Lower lobe of right lung (tissue), 2 donors: ENCODE measurements at regions of chr15 and their contacts with region 1.

Region 1: DNA sequence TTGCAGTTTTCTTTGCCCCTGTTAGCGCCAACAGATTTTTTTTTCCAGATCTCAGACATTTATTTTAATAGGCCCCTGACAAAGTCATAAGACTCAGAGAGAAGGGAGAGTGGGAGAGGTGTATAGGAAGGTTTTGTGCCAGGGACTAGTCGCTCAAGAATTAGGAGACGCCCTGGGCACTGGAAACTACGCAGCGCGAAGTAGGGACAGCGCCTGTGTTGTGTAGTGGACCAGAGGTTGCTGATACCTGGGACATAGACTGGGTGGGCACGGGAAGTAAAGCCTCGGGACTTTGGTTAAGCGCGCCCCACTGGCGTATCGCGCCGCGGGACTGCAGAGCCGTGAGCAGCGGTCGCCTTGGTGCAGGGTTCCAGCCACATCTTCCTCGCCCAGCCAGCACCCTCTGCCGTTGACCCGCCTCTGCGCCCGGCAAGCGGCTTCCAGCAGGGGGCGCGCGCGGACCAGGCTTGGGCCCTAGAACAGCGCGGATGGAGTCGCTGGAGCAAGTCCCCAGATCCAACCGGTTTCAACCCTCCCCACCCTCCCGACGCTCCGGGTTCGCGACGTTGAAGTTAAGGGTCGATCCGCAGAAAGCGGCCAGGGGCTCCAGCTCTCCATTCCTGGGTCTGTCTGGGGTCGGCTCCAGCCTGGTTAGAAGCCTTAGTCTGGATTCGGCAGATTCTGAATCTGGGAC is 3.0 kb upstream of the ISLR2 start:
- DNase-seq: peak; percentile 90
- ATAC-seq: peak; percentile 93 to 95
- H3K4me3 ChIP-seq: peak overlapping the region; percentile 46
- H3K27ac ChIP-seq: no peak overlapping the region
- H3K4me1 ChIP-seq: peaks cover 31% of the 10 kb centered on the region
- H3K27me3 ChIP-seq: peaks cover 79% of the 10 kb centered on the region
- CTCF ChIP-seq: peak; percentile 98

Region 2: DNA sequence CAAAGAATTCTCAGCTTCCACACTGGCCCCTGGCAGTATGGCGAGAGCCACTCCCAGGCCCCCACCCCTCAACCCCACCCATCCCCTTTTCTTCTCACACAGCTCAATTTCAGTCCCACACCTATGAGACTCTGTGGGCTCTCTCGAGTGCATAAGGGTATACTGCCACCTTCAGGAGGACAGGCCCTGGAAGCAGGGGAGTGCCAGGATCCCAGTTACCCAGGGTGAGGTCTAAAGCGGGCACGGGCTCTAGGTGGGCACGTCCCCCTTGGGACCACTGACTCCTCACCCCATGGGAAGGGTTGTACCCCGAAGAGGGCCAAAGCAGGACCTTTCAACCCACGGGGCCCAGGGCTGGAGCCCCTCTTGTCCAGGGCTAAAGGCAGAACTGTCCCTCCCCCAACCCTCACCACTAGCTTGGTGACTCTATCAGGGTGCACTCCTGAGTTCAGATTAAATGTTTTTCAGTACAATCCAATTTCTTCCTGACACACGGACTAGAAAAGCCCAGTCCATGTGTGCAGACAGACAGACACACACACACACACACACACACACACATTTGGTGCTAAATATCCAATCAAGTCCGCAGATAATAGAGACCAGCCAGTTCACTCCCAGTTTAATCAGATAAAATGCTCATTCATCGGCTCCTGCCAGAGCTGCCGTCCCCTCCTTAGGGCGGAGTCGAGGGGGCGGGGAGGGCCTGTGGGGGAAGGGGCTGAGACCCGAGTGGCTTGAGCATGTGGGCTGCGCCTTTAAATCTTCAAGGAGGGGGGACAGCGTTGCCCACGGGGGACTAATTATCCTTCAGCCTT is 180.6 kb after region 1 on chr15:
- intact Hi-C with region 1: loop called (anchors 5 kb)
- DNase-seq: no peak
- ATAC-seq: peak; percentile 52 to 69
- H3K4me3 ChIP-seq: no peak overlapping the region
- H3K27ac ChIP-seq: no peak overlapping the region
- H3K4me1 ChIP-seq: no peaks in the 10 kb centered on the region
- H3K27me3 ChIP-seq: peaks cover 55% of the 10 kb centered on the region
- CTCF ChIP-seq: peak; percentile 59